ENCODE measurements at regions of chr12 and their contacts with region 1.

Region 1: DNA sequence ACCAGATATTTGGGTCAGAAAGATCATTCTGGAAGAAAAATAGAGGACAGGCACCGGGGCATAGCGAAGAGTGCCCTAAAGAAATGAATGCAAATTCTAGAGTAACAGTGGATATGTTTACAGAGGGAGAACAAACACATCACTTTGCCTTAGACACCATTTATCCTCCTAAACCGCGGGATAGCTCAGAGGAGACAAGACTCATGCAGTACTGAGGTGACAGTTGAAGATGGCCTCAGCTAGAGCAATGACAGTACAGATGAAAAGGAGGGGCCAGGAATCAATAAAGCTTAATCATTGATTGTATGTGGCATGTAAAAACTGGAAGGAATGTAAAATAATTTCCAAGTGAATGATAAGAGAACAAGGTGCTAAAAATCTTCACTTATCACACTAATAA is 10.5 kb upstream of the PPP1R12A start:
- DNase-seq: no peak
- ATAC-seq: no peak
- H3K4me3 ChIP-seq: no peak overlapping the region
- H3K4me3 Mint-ChIP-seq: no peak overlapping the region
- H3K27ac ChIP-seq: no peak overlapping the region
- H3K27ac Mint-ChIP-seq: no peak overlapping the region
- H3K4me1 ChIP-seq: no peaks in the 10 kb centered on the region
- H3K4me1 Mint-ChIP-seq: no peaks in the 10 kb centered on the region
- H3K27me3 ChIP-seq: peaks cover 0 to 3% of the 10 kb centered on the region in 2 experiments
- H3K27me3 Mint-ChIP-seq: peaks cover 0 to 4% of the 10 kb centered on the region in 2 donors

Region 2: GRCh38 chr12:79083181-79083580 is 862.3 kb before region 1 on chr12:
- CTCF ChIA-PET with region 1: interaction called in 1 of 2 experiments, 13 read pairs
- POLR2A ChIA-PET with region 1: no interaction called
- DNase-seq: no peak
- ATAC-seq: no peak
- H3K4me3 ChIP-seq: no peak overlapping the region
- H3K4me3 Mint-ChIP-seq: no peak overlapping the region
- H3K27ac ChIP-seq: no peak overlapping the region
- H3K27ac Mint-ChIP-seq: no peak overlapping the region
- H3K4me1 ChIP-seq: no peaks in the 10 kb centered on the region
- H3K4me1 Mint-ChIP-seq: no peaks in the 10 kb centered on the region
- H3K27me3 ChIP-seq: no peaks in the 10 kb centered on the region
- H3K27me3 Mint-ChIP-seq: no peaks in the 10 kb centered on the region

Measured in T-cell (primary cell).